OCI-LY7 (cell line): ENCODE measurements at regions of chr6 and their contacts with region 1.

Region 1: GRCh38 chr6:157667211-157668008 is 155.6 kb upstream of the SNX9 start:
- DNase-seq: peak; percentile 74
- H3K4me3 ChIP-seq: no peak overlapping the region
- H3K27ac ChIP-seq: no peak overlapping the region
- H3K4me1 ChIP-seq: no peaks in the 10 kb centered on the region
- CTCF ChIP-seq: peak; percentile 98

Region 2: GRCh38 chr6:157503018-157503747 is 164.2 kb before region 1 on chr6:
- CTCF ChIA-PET with region 1: no interaction called
- POLR2A ChIA-PET with region 1: no interaction called
- intact Hi-C with region 1: loop called (anchors 1 kb)
- DNase-seq: peak; percentile 12
- H3K4me3 ChIP-seq: no peak overlapping the region
- H3K27ac ChIP-seq: no peak overlapping the region
- H3K4me1 ChIP-seq: peaks cover 4% of the 10 kb centered on the region
- CTCF ChIP-seq: no peak

Region 3: GRCh38 chr6:157607317-157608109 is 59.9 kb before region 1 on chr6:
- CTCF ChIA-PET with region 1: no interaction called
- POLR2A ChIA-PET with region 1: interaction called, 3 read pairs
- intact Hi-C with region 1: loop called (anchors 5 kb)
- DNase-seq: peak; percentile 79
- H3K4me3 ChIP-seq: peak overlapping the region; percentile 10
- H3K27ac ChIP-seq: peak overlapping the region; percentile 36
- H3K4me1 ChIP-seq: peaks cover 41% of the 10 kb centered on the region
- CTCF ChIP-seq: no peak

Region 4: GRCh38 chr6:157693867-157694266 is 26.5 kb after region 1 on chr6:
- CTCF ChIA-PET with region 1: no interaction called
- POLR2A ChIA-PET with region 1: no interaction called
- intact Hi-C with region 1: no loop called
- DNase-seq: no peak
- H3K4me3 ChIP-seq: no peak overlapping the region
- H3K27ac ChIP-seq: no peak overlapping the region
- H3K4me1 ChIP-seq: no peaks in the 10 kb centered on the region
- CTCF ChIP-seq: no peak

Region 5: DNA sequence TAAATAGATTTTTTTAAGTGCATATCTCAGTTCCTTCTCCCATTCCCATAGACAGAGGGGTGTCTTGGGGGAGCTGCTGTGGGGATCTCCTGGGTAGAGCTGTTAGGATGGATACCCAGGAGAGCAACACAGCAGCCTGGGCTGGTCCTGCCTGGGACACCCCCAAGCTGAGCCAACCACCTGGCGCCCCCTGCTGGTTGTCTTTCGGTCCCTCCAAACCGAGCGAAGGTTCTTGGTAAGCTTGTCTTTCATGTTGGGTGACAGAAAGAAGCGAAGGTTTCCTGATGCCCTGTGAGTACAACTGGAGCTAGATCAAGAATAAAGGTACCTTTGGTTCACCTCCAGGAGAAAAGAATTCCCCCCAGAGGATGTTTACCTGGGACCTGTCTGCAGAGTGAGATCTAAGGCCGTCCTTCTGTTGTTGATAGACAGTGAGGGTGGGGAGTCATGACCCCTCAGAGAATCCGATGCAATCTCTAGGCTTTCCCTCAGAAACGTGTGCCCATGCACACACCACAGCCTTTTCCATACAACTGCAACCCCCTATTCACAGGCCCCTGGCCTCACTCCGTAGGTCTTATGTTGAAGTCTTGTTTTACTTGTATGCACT is 206.4 kb after region 1 on chr6:
- CTCF ChIA-PET with region 1: no interaction called
- POLR2A ChIA-PET with region 1: no interaction called
- intact Hi-C with region 1: loop called (anchors 2 kb)
- DNase-seq: peak; percentile 78
- H3K4me3 ChIP-seq: no peak overlapping the region
- H3K27ac ChIP-seq: no peak overlapping the region
- H3K4me1 ChIP-seq: no peaks in the 10 kb centered on the region
- CTCF ChIP-seq: peak; percentile 94

Region 6: GRCh38 chr6:158452182-158452581 is 784.8 kb after region 1 on chr6:
- CTCF ChIA-PET with region 1: no interaction called
- POLR2A ChIA-PET with region 1: no interaction called
- intact Hi-C with region 1: no loop called
- DNase-seq: no peak
- H3K4me3 ChIP-seq: no peak overlapping the region
- H3K27ac ChIP-seq: no peak overlapping the region
- H3K4me1 ChIP-seq: no peaks in the 10 kb centered on the region
- CTCF ChIP-seq: no peak